ENCODE measurements at regions of chr4 and their contacts with region 1.

Region 1: GRCh38 chr4:147078875-147079658 is 133.4 kb upstream of the TTC29 start:
- DNase-seq: peak; percentile 50
- ATAC-seq: peak; percentile 55

Region 2: DNA sequence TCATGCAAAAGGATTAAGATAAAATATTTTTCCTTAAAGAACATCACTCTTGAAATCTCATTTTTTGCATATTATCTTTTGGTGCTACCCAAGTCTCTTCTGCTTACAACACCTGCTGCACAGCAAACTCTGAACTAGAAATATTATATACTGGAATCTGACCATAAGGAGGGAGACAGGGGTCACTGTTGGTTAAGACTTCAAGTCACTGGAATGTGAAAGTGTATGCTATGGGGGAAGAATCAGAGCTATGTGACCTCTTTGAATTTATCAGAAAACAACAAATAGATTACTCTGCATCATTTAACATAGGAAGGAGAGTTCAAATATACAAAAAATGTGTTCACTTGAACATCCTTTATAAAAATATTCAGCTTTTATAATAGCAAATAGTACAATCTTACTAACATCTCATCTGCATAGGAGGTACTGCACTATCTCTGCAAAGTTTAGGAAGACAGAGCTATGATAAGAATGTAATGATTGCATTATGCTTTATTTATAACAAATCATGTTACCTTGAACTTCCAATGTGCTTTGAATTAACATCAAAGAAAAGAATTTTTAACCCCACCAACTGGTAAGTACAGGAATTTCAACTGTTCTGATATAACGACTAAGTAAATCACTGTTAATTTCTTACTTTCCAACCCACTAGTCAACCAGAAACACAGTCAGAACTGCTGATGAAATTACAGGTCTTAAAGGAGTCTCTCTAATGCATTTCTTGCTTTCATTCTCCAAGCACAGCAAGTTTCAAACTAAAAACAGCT is 1210.2 kb before region 1 on chr4:
- intact Hi-C with region 1: no loop called
- DNase-seq: no peak
- ATAC-seq: no peak

Region 3: DNA sequence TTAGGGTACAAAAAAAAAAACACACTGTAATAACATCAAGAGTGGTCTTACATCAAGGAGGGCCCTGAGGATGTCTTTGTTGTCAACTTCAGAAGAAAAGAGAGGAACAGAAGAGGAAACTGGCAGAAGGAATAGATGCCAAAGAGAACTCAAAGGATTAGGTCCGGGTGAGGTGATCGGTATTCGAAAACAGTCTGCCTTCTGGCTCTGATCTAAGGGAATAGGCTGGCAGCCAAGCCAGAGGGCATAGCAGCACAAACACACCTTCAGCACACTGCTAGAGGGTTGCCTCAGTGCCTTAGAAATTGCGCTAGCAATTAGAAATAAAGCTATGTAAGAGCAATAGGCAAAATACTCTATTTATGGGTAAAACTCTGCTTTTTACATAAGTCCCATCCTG is 42.0 kb before region 1 on chr4:
- intact Hi-C with region 1: loop called (anchors 5 kb)
- DNase-seq: no peak
- ATAC-seq: peak; percentile 63

Region 4: GRCh38 chr4:147057611-147058190 is 21.4 kb before region 1 on chr4:
- intact Hi-C with region 1: no loop called
- DNase-seq: no peak
- ATAC-seq: no peak